ENCODE measurements at regions of chr5 and their contacts with region 1.

Region 1: DNA sequence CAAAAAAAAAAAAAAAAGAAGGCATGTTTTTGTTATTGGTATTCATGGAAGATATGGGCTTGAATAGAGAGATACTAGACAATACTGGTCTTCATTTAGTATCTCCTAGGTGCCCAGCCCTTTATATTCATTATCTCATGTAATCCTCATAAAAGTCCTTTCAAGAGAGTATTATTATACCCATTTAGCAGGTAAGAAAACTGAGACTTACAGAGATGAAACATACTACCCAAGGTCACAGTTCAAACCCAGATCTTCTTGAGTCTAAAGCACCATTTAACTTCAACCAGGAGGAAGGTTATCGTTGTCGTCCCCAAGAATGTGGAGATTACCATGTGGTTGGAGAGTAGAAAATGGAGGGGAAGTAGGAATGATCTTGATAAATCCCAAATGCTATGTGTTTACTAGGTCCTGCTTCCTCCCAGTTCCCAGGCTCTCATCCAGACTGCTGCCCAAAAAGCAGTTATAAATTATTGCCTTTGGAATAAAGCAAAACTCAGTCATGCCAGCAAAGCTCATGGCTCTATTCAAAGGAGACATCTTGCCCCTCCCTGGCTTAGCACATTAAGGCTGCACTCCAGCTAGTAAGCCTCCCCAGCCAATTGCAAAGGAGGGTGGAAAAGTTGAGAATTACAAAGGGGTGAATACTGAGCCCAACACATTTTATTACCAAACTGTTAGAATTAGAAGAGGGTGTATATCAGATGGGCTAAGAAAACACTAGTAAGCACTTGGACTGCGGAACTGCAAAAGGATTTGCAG is 163.9 kb downstream of the PIK3R1 start:
- DNase-seq: no peak
- H3K4me3 ChIP-seq: no peak overlapping the region
- H3K4me3 Mint-ChIP-seq: no peak overlapping the region
- H3K27ac Mint-ChIP-seq: no peak overlapping the region
- H3K4me1 ChIP-seq: no peaks in the 10 kb centered on the region
- H3K4me1 Mint-ChIP-seq: no peaks in the 10 kb centered on the region
- H3K27me3 ChIP-seq: no peaks in the 10 kb centered on the region
- H3K27me3 Mint-ChIP-seq: no peaks in the 10 kb centered on the region
- CTCF ChIP-seq: no peak

Region 2: GRCh38 chr5:68406767-68407241 is 27.3 kb after region 1 on chr5:
- CTCF ChIA-PET with region 1: no interaction called
- POLR2A ChIA-PET with region 1: no interaction called
- intact Hi-C with region 1: no loop called
- DNase-seq: peak in 1 of 2 experiments; percentile 47
- H3K4me3 ChIP-seq: no peak overlapping the region
- H3K4me3 Mint-ChIP-seq: no peak overlapping the region
- H3K27ac Mint-ChIP-seq: no peak overlapping the region
- H3K4me1 ChIP-seq: 0 out of 2 replicates have a peak, but pooled peaks cover 8% of the 10 kb centered on the region
- H3K4me1 Mint-ChIP-seq: peaks cover 6% of the 10 kb centered on the region
- H3K27me3 ChIP-seq: no peaks in the 10 kb centered on the region
- H3K27me3 Mint-ChIP-seq: no peaks in the 10 kb centered on the region
- CTCF ChIP-seq: no peak

Region 3: DNA sequence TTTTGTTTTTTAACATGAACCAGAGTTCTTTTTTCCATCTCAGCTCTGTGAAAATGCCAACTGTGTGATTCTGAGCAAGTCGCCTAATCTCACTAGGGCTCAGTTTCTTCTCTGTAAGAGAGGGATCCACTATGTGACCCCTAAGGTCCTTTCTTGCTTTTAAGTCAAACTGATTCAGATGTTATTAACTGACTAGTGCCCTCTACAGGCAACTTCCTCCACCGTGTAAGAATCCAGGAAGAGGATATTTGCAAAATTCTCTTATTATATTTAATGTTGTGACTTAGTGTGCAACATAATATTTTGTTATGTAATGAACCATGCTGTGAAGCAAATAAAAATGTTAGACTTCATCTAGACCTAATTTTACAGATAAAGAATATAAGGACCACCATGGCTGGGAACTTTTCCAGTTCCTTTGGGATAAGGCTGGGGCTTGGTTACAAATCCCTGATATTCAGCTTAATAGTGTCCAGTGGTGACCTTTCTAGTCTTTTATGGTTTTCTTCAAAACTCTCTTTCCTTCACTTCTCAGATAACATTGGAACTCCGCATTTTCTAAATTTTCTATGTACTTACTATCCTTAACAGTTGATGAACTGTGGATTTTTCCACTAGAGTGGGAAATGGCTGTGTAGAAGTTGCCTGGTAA is 80.8 kb after region 1 on chr5:
- CTCF ChIA-PET with region 1: no interaction called
- POLR2A ChIA-PET with region 1: no interaction called
- intact Hi-C with region 1: loop called (anchors 1 kb)
- DNase-seq: peak in 1 of 2 experiments; percentile 28
- H3K4me3 ChIP-seq: no peak overlapping the region
- H3K4me3 Mint-ChIP-seq: no peak overlapping the region
- H3K27ac Mint-ChIP-seq: no peak overlapping the region
- H3K4me1 ChIP-seq: peaks cover 22% of the 10 kb centered on the region
- H3K4me1 Mint-ChIP-seq: no peaks in the 10 kb centered on the region
- H3K27me3 ChIP-seq: no peaks in the 10 kb centered on the region
- H3K27me3 Mint-ChIP-seq: no peaks in the 10 kb centered on the region
- CTCF ChIP-seq: peak; percentile 30 to 52

Region 4: DNA sequence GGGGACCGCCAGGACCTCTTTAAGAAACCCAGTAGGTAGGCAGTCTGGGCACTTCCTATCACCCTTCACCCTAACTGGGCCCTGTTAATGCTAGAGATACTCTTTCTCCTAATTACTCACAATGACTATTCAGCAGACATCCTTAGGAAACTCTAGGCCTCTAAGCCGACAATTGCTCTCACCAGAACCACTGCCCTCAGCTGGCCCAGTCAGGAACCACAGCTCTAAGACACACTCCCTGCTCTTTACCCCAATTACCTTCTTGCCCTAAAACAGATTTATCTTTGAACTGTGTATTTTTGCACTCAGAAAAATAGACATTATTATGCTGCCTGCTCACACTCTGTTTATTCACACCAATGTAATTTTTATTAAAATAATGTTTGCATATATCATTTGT is 281.8 kb after region 1 on chr5:
- CTCF ChIA-PET with region 1: no interaction called
- POLR2A ChIA-PET with region 1: no interaction called
- intact Hi-C with region 1: loop called (anchors 1 kb)
- DNase-seq: peak in 1 of 2 experiments; percentile 24
- H3K4me3 ChIP-seq: no peak overlapping the region
- H3K4me3 Mint-ChIP-seq: no peak overlapping the region
- H3K27ac Mint-ChIP-seq: no peak overlapping the region
- H3K4me1 ChIP-seq: no peaks in the 10 kb centered on the region
- H3K4me1 Mint-ChIP-seq: no peaks in the 10 kb centered on the region
- H3K27me3 ChIP-seq: no peaks in the 10 kb centered on the region
- H3K27me3 Mint-ChIP-seq: no peaks in the 10 kb centered on the region
- CTCF ChIP-seq: peak; percentile 38 to 50

Region 5: GRCh38 chr5:68780299-68780955 is 401.0 kb after region 1 on chr5:
- CTCF ChIA-PET with region 1: no interaction called
- POLR2A ChIA-PET with region 1: no interaction called
- intact Hi-C with region 1: no loop called
- DNase-seq: no peak
- H3K4me3 ChIP-seq: no peak overlapping the region
- H3K4me3 Mint-ChIP-seq: no peak overlapping the region
- H3K27ac Mint-ChIP-seq: no peak overlapping the region
- H3K4me1 ChIP-seq: no peaks in the 10 kb centered on the region
- H3K4me1 Mint-ChIP-seq: no peaks in the 10 kb centered on the region
- H3K27me3 ChIP-seq: no peaks in the 10 kb centered on the region
- H3K27me3 Mint-ChIP-seq: peaks cover 5% of the 10 kb centered on the region
- CTCF ChIP-seq: no peak

Measured in Caco-2 (cell line).